A549 (cell line): ENCODE measurements at regions of chr19 and their contacts with region 1.

Region 1: DNA sequence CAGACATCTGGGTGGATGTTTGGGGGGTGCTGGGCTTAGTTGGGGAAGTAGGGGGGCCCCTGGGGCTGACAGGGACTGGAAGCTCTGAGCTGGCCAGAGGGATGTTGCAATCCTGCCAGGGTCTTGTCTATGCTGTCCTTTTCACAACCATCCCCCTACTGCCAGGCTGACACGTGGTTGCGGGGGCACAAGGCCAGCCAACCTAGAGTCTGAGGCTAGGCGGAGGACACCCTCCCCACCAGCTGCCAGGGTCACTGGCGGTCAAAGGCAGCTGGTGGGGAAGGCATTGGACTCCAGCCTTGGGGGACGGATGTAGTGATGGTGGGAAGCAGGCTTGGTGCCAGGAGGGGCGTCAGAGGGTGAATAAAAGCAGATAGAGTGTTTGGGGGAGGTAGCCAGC is 1.6 kb upstream of the APOC1 start:
- DNase-seq: no peak
- ATAC-seq: no peak
- H3K4me3 ChIP-seq: no peak overlapping the region
- H3K27ac ChIP-seq: peak overlapping the region in 1 of 2 experiments; percentile 92; a peak in 4 of 6 replicates
- H3K4me1 ChIP-seq: peaks cover 36% of the 10 kb centered on the region
- CTCF ChIP-seq: no peak
- EP300 ChIP-seq: no peak
- POLR2A ChIP-seq: no peak
- RAD21 ChIP-seq: no peak

Region 2: DNA sequence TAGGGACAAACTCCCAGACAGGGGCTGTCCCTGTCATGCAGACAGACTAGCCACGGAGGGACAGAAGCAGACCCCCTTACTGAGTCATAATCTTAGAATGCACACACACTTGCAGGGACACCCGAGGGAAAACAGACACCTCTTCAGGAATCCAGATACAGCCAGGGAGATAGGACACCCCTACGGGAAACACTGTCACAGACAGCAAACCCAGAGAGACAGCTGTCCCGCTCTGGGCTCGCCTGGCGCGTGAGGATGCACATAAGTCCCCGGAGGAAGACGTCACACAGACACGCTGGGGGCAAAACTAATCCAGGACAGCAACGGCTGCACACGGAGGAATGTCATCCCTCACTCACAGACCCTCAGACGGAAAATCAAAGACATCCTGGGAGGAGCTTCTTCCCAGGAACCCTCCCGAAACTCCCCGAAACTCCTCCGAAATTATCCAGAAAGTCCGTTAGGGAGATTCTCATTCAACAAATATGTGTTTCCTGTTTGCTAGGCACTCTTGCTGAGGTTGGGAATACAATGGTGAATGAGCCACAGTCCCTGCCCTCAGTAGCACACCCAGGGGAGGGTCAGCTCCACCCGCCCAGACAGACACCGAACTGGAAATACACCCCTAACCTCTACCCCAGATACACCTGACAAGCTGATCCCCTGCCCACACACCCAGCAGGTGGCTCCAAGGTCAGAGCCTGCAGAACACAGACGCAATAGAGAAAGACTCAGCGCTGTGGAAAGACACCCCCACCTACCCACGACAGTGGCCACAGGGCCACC is 37.0 kb before region 1 on chr19:
- CTCF ChIA-PET with region 1: no interaction called
- POLR2A ChIA-PET with region 1: no interaction called
- DNase-seq: no peak
- ATAC-seq: no peak
- H3K4me3 ChIP-seq: no peak overlapping the region
- H3K27ac ChIP-seq: no peak overlapping the region
- H3K4me1 ChIP-seq: no peaks in the 10 kb centered on the region
- CTCF ChIP-seq: no peak
- EP300 ChIP-seq: no peak
- POLR2A ChIP-seq: no peak
- RAD21 ChIP-seq: no peak

Region 3: DNA sequence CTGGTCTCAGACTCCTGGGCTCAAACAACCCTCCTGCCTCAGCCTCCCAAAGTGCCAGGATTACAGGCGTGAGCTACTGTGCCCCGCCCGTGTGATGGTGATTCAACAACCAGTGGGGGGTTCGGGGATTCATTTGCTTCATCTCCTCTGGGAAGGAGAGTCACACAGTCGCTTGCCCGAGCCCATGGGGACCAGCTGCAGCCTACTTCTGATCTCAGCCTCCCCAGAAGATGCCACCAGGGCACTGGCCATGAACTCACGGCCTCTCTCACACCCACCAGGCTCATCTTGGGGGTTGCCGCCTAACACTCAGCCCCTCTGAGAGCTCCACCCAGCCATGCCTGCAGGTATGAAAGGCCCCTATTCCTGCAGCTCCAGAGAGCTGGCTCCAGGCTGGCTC is 15.0 kb before region 1 on chr19:
- CTCF ChIA-PET with region 1: interaction called, 52 read pairs
- POLR2A ChIA-PET with region 1: interaction called, 5 read pairs
- DNase-seq: no peak
- ATAC-seq: no peak
- H3K4me3 ChIP-seq: no peak overlapping the region
- H3K27ac ChIP-seq: no peak overlapping the region
- H3K4me1 ChIP-seq: peaks cover 7% of the 10 kb centered on the region
- CTCF ChIP-seq: no peak
- EP300 ChIP-seq: no peak
- POLR2A ChIP-seq: no peak
- RAD21 ChIP-seq: no peak

Region 4: GRCh38 chr19:44925114-44925891 is 12.4 kb after region 1 on chr19:
- CTCF ChIA-PET with region 1: interaction called, 13 read pairs
- POLR2A ChIA-PET with region 1: interaction called, 7 read pairs
- DNase-seq: no peak
- ATAC-seq: no peak
- H3K4me3 ChIP-seq: no peak overlapping the region
- H3K27ac ChIP-seq: no peak overlapping the region
- H3K4me1 ChIP-seq: peaks cover 15% of the 10 kb centered on the region; the same call in 2 of the 3 replicates
- CTCF ChIP-seq: no peak
- EP300 ChIP-seq: no peak
- POLR2A ChIP-seq: no peak
- RAD21 ChIP-seq: no peak

Region 5: DNA sequence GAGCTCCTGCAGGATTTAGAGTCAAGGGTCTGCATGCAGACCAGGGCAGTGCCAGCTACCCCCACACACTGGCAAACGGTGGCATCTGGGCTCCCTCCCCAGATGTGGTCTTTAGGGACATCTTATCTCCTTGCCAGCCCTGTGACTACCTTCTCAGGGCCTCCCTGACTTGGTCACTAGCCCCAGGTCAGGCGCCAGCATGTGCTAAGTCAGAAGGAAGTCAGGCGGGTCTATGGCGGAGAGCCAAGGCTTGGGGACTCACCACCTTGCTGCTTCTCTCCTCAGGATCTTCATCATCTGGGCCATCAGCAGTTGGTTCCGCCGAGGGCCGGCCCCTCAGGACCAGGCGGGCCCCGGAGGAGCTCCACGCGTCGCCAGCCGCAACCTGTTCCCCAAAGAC is 59.9 kb after region 1 on chr19:
- CTCF ChIA-PET with region 1: no interaction called
- POLR2A ChIA-PET with region 1: no interaction called
- DNase-seq: no peak
- ATAC-seq: no peak
- H3K4me3 ChIP-seq: no peak overlapping the region
- H3K27ac ChIP-seq: no peak overlapping the region
- H3K4me1 ChIP-seq: no peaks in the 10 kb centered on the region
- CTCF ChIP-seq: no peak
- EP300 ChIP-seq: no peak
- POLR2A ChIP-seq: no peak
- RAD21 ChIP-seq: no peak